ENCODE measurements at regions of chr15 and their contacts with region 1.

Region 1: GRCh38 chr15:31215490-31216214 is 111.0 kb upstream of the KLF13 start:
- DNase-seq: peak; percentile 64
- H3K4me3 ChIP-seq: peak overlapping the region; percentile 41 to 74 (median 58)
- H3K27ac ChIP-seq: peak overlapping the region; percentile 87 to 97 (median 94)
- H3K4me1 ChIP-seq: peaks cover 41 to 98% (median 49%) of the 10 kb centered on the region in 3 donors
- H3K27me3 ChIP-seq: no peaks in the 10 kb centered on the region
- CTCF ChIP-seq: peak; percentile 86 to 96 (median 90)
- POLR2A ChIP-seq: peak in 2 of 4 donors; percentile 48 to 62

Region 2: GRCh38 chr15:31024330-31024729 is 191.3 kb before region 1 on chr15:
- intact Hi-C with region 1: no loop called
- DNase-seq: no peak
- H3K4me3 ChIP-seq: no peak overlapping the region
- H3K27ac ChIP-seq: peak overlapping the region in 3 of 4 donors; percentile 3 to 71 (median 65)
- H3K4me1 ChIP-seq: peaks cover 10 to 29% (median 17%) of the 10 kb centered on the region in 3 donors
- H3K27me3 ChIP-seq: no peaks in the 10 kb centered on the region
- CTCF ChIP-seq: no peak
- POLR2A ChIP-seq: no peak

Region 3: GRCh38 chr15:31326156-31326732 is 110.6 kb after region 1 on chr15:
- intact Hi-C with region 1: loop called (anchors 5 kb)
- DNase-seq: peak; percentile 92
- H3K4me3 ChIP-seq: peak overlapping the region; percentile 48 to 96 (median 64)
- H3K27ac ChIP-seq: peak overlapping the region; percentile 90 to 100 (median 95)
- H3K4me1 ChIP-seq: peaks cover 33 to 43% (median 33%) of the 10 kb centered on the region in 3 donors
- H3K27me3 ChIP-seq: no peaks in the 10 kb centered on the region
- CTCF ChIP-seq: peak in 2 of 6 experiments; percentile 5 to 20
- POLR2A ChIP-seq: peak in 3 of 4 donors; percentile 68 to 98 (median 97)

Region 4: DNA sequence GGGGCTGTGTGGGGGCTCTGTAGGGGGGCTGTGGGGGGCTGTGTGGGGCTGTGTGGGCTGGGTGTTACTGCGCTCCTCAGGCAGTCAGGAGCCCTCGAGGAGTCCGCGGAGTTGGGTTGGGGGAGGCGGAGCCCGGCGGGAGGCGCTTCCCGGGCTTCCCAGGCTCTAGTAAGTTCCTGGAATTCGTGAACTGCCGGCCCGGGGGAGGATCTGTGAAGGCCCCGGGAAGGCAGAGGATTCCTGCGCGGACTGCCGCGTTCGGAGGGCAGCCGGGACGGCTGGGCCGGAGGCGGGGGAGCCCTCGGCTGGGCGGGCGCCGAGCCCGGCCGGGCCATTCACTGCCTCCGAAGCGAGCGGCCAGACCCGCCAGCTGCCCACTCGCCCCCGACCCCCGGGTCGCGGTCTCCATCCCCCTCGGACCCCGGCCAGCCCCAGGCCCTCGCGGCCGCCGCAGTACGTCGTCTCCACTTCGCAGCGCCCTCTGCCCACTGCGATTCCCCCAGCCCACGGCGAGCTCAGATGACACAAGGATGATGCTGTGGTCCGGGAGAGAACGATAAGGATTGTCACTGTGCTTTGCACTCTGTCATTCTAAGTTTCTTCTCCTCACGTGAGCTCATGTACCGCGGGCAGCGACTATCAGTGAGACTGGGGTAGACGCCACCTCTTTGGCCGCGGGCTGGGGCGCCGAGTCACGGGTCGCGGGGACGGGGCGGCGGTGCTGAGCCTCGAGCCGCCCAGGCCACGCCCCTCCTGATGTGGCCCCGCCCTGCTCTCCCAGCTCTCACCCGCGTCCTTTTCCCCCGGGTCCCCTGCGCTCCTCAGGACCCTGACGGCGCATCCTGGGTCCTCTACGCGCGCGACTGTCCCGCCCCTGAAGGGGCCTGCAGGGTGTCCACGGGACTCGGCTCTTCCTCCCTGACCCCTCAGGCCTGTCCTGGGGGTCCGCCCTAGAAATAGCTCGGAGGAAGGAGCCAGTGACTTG is 176.3 kb after region 1 on chr15:
- intact Hi-C with region 1: loop called (anchors 10 kb)
- DNase-seq: peak; percentile 36
- H3K4me3 ChIP-seq: peak overlapping the region; percentile 49 to 71 (median 52)
- H3K27ac ChIP-seq: peak overlapping the region; percentile 83 to 94 (median 89)
- H3K4me1 ChIP-seq: peaks cover 14 to 50% (median 29%) of the 10 kb centered on the region in 3 donors
- H3K27me3 ChIP-seq: no peaks in the 10 kb centered on the region
- CTCF ChIP-seq: no peak
- POLR2A ChIP-seq: peak in 3 of 4 donors; percentile 13 to 97 (median 85)

Measured in esophagus squamous epithelium (tissue), 5 donors.